Gastrocnemius medialis (tissue), 4 donors: ENCODE measurements at regions of chr9 and their contacts with region 1.

Region 1: GRCh38 chr9:34637356-34638137 is at the start of gene SIGMAR1:
- DNase-seq: peak; percentile 90 to 91
- ATAC-seq: peak; percentile 92
- H3K4me3 ChIP-seq: peak within 1 kb of the TSS; percentile 66 to 95 (median 74)
- H3K27ac ChIP-seq: peak within 1 kb of the TSS; percentile 80 to 93 (median 86)
- H3K4me1 ChIP-seq: peaks cover 12 to 16% of the 10 kb centered on the region in 2 donors
- H3K27me3 ChIP-seq: no peaks in the 10 kb centered on the region
- CTCF ChIP-seq: peak in 1 of 5 experiments; percentile 18
- POLR2A ChIP-seq: peak; percentile 81 to 87
- total RNA-seq, gene SIGMAR1: 18.9 to 35.7 (median 27.4) TPM

Region 2: DNA sequence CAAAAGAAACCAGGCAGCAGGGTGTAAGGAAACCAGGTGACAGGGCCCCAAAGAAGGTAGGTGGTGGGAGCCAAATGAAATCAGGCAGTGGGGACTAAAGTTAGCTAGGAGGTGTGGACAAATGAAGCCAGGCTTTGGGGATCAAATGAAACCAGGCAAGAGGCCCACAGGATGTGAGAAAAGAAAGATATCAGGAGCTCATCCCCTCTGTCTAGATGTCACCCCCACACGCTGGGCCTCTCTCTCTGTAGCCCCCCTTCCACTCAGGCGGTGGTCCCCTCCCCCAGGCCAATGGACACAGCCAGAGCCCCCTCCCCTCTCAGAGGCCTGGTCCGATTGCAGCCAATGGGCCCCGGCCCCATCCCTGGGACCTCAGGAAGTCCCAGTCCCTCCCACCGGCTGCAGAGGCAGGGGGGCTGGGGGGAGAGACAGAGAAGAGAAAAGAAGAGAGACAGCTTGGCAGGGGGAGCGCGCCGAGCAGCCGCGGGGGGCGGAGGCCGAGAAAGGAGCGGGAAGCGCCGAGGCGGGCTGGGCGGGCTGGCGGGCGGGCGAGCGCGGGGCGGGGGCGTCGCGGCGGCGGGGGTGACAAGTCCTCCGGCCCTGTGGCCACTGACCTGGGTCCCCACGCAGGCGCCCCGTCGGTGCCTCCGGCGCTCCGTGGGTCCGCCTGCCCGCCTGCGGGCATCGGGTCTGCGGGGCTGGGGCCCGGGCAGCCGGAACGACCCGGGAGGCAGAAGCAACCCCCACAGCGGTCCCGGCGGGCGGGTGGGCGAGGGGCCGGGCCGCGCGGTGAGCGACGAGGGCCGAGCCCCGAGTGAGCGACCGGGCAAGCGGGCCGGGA is 59.9 kb before region 1 on chr9:
- in situ Hi-C with region 1: no loop called
- intact Hi-C with region 1: no loop called
- DNase-seq: no peak
- ATAC-seq: no peak
- H3K4me3 ChIP-seq: no peak overlapping the region
- H3K27ac ChIP-seq: no peak overlapping the region
- H3K4me1 ChIP-seq: peaks cover under 1 to 24% of the 10 kb centered on the region in 2 donors
- H3K27me3 ChIP-seq: no peaks in the 10 kb centered on the region
- CTCF ChIP-seq: no peak
- POLR2A ChIP-seq: no peak

Region 3: GRCh38 chr9:34611829-34612630 is 25.5 kb before region 1 on chr9 and contains the start of gene RPP25L:
- in situ Hi-C with region 1: no loop called
- intact Hi-C with region 1: loop called (anchors 1 kb)
- DNase-seq: peak; percentile 75 to 76
- ATAC-seq: peak; percentile 79 to 83
- H3K4me3 ChIP-seq: peak within 1 kb of the TSS; percentile 67 to 89 (median 81)
- H3K27ac ChIP-seq: peak within 1 kb of the TSS; percentile 93 to 98 (median 96)
- H3K4me1 ChIP-seq: peaks cover 23 to 30% of the 10 kb centered on the region in 2 donors
- H3K27me3 ChIP-seq: no peaks in the 10 kb centered on the region
- CTCF ChIP-seq: peak in 1 of 5 experiments; percentile 9
- POLR2A ChIP-seq: peak; percentile 82 to 90
- total RNA-seq, gene RPP25L: 53.7 to 138 (median 97.2) TPM

Region 4: GRCh38 chr9:34620061-34620994 is 17.2 kb before region 1 on chr9 and contains the start of gene DCTN3:
- in situ Hi-C with region 1: no loop called
- intact Hi-C with region 1: loop called (anchors 2 kb)
- DNase-seq: peak; percentile 90 to 93
- ATAC-seq: peak; percentile 99 to 100
- H3K4me3 ChIP-seq: peak within 1 kb of the TSS; percentile 76 to 94 (median 93)
- H3K27ac ChIP-seq: peak within 1 kb of the TSS; percentile 44 to 71 (median 63)
- H3K4me1 ChIP-seq: peaks cover 8 to 15% of the 10 kb centered on the region in 2 donors
- H3K27me3 ChIP-seq: peaks cover 33 to 39% (median 37%) of the 10 kb centered on the region in 3 donors
- CTCF ChIP-seq: peak in 1 of 5 experiments; percentile 20
- POLR2A ChIP-seq: peak in 1 of 2 donors; percentile 24
- total RNA-seq, gene DCTN3: 62.8 to 174 (median 105) TPM

Region 5: GRCh38 chr9:34719021-34720015 is 81.8 kb after region 1 on chr9:
- in situ Hi-C with region 1: no loop called
- intact Hi-C with region 1: no loop called
- DNase-seq: no peak
- ATAC-seq: no peak
- H3K4me3 ChIP-seq: no peak overlapping the region
- H3K27ac ChIP-seq: no peak overlapping the region
- H3K4me1 ChIP-seq: peaks cover 2 to 9% of the 10 kb centered on the region in 2 donors
- H3K27me3 ChIP-seq: no peaks in the 10 kb centered on the region
- CTCF ChIP-seq: no peak
- POLR2A ChIP-seq: no peak

Region 6: DNA sequence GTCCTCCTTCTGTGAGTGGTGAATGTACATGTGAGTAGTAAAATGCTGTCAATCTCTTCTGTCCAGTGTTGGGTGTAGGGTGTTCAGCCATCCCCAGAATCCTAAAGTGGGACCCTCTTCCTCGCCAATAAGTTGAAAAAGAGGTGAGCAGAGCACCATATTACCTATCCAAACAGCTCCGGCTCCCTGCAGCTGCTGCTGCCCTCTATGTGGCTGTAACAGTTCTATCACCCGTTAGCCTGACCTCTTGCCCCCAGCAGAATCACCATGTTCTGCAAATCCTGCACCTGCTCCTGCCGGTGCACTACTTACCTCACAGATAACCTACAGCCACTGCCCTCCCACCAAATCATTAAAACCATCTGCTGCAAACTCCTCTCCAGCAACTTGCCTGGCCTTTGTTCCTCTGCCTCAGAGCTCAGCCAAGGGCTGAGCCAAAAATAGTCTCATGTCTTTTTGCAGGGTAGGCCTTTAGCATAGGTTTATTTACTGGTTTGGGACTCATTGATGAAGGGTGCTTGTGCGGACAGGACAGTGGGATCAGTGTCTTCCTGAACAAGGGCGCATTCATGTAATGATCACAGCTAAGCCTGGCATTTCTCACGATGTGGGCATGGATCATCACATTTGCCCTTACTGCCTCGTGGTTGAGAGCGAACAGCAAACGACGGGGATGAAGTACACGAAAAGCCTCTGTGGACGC is 122.0 kb after region 1 on chr9:
- in situ Hi-C with region 1: no loop called
- intact Hi-C with region 1: no loop called
- DNase-seq: no peak
- ATAC-seq: no peak
- H3K4me3 ChIP-seq: no peak overlapping the region
- H3K27ac ChIP-seq: no peak overlapping the region
- H3K4me1 ChIP-seq: no peaks in the 10 kb centered on the region
- H3K27me3 ChIP-seq: no peaks in the 10 kb centered on the region
- CTCF ChIP-seq: no peak
- POLR2A ChIP-seq: no peak